Activated T-helper 1 cell treated with anti-CD3 and anti-CD28 coated beads, Interleukin-12 subunit alpha, Interleukin-12 subunit beta, Interleukin-2, Interleukin-4 antibody, amounts not matched to agents 30 ng/mL and 10 ng/mL and 1 ng/mL, durations not matched to agents 14 hours and 24 hours and 36 hours (primary cell): ENCODE measurements at regions of chr9 and their contacts with region 1.

Region 1: DNA sequence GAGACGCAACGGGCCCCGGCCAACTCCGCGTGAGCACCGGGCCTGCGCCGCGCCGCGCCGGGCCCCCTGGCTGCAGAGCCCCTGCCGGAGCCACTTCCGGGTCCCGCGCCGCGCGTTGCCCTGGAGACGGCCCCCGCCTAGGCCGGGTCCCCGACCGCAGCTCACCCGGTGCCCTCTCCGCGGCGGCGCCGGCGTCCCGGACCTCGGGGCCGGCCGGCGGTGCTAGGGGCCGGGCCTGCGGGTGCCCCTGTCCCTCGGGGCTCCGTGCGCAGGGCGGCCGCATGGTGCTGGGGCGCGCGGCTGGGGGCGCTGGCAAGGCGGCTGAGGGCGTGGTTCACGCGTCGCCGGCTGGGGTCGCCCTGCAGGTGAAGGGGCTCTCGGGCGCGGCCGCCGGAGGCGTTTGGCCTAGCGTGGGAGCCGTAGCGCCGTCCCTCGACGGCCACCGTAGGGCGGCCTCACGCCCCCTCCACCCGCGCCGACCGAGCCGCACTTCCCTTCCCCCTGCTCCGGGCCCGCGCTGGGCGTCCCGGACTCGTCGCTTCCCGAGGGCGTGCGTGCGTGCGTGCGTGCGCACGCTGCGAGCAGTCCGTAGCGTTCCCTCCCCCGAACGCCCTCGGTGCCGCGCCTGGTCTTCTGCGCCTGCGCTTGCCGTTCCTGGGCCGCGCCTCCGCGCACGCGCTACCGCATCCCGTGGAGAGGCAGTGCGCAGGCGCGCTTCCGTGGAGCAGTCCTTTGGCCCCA is at the start of gene TMEM250:
- DNase-seq: peak; percentile 96
- H3K4me3 Mint-ChIP-seq: peak within 1 kb of the TSS; percentile 82
- H3K27ac Mint-ChIP-seq: peak within 1 kb of the TSS; percentile 76
- H3K4me1 Mint-ChIP-seq: peaks cover 11% of the 10 kb centered on the region
- H3K27me3 Mint-ChIP-seq: no peaks in the 10 kb centered on the region
- total RNA-seq, gene TMEM250: 50.1 and 51.5 TPM in 2 replicates

Region 2: DNA sequence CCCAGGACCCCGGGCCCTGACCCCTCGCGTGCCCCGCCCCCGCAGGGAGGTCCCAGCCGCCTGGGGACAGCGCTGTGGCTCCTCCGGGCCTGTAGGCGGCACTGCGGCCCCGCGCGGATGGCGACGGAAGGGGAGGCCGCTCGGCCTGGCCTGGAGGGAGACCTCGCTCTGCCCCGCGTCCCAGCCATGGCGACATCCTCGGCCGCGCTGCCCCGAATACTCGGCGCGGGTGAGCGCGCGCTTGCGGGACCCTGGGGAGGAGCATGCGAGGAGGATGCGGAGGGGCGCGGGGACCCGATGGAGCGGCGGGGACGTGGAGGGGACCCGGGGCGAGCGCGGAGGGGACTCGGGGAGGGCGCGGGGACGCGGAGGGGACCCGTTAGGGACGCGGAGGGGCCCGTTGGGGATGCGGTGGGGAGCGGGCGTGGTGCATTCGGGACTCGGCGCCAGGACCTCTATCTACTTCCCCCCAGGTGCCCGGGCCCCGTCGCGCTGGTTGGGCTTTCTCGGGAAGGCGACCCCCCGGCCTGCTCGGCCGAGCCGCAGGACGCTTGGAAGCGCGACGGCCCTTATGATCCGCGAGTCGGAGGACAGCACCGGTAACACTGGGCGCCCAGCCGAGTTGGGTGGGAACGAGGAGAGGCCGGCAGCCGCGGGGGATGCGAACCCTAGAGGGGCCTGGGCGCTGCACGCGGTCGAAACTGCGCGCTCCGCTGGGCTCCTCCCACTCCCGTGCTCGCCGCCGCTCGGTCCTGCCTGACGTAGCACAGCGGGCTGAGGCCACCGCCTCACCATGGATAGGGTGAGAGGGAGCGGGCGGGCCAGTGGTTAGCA is 617.7 kb before region 1 on chr9 and contains the start of gene MRPS2:
- intact Hi-C with region 1: loop called (anchors 10 kb)
- DNase-seq: peak; percentile 85
- H3K4me3 Mint-ChIP-seq: peak within 1 kb of the TSS; percentile 92
- H3K27ac Mint-ChIP-seq: peak within 1 kb of the TSS; percentile 91
- H3K4me1 Mint-ChIP-seq: peaks cover 18% of the 10 kb centered on the region
- H3K27me3 Mint-ChIP-seq: peaks cover 7% of the 10 kb centered on the region
- total RNA-seq, gene MRPS2: 66.6 and 70.8 TPM in 2 replicates

Region 3: GRCh38 chr9:135864447-135865049 is 253.9 kb before region 1 on chr9:
- intact Hi-C with region 1: loop called (anchors 2 kb)
- DNase-seq: peak; percentile 39
- H3K4me3 Mint-ChIP-seq: no peak overlapping the region
- H3K27ac Mint-ChIP-seq: no peak overlapping the region
- H3K4me1 Mint-ChIP-seq: peaks cover 28% of the 10 kb centered on the region
- H3K27me3 Mint-ChIP-seq: no peaks in the 10 kb centered on the region

Region 4: DNA sequence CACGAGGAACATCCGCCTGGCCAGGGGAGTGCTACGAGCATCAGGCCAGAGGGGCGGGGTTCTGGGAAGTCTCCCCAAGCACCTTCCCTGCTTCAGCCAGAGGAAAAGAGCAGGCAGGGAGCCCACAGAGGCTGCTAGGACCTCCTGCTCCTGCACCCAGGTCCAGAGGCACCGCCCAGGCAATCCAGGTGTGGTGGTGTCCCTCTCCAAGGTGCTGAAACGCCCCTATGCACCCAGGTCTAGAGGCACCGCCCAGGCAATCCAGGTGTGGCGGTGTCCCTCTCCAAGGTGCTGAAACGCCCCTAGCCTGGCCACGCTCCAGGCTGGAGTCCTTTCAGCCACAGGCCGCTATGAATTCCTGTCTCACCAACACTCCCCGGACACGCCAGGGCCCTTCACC is 146.6 kb before region 1 on chr9:
- intact Hi-C with region 1: loop called (anchors 1 kb)
- DNase-seq: peak; percentile 32
- H3K4me3 Mint-ChIP-seq: no peak overlapping the region
- H3K27ac Mint-ChIP-seq: no peak overlapping the region
- H3K4me1 Mint-ChIP-seq: peaks cover 9% of the 10 kb centered on the region
- H3K27me3 Mint-ChIP-seq: peaks cover 4% of the 10 kb centered on the region

Region 5: GRCh38 chr9:136312436-136312835 is 193.9 kb after region 1 on chr9:
- intact Hi-C with region 1: no loop called
- DNase-seq: no peak
- H3K4me3 Mint-ChIP-seq: no peak overlapping the region
- H3K27ac Mint-ChIP-seq: no peak overlapping the region
- H3K4me1 Mint-ChIP-seq: no peaks in the 10 kb centered on the region
- H3K27me3 Mint-ChIP-seq: peaks cover 4% of the 10 kb centered on the region

Region 6: GRCh38 chr9:136400038-136400834 is 281.7 kb after region 1 on chr9 and contains the start of gene SNAPC4:
- intact Hi-C with region 1: loop called (anchors 1 kb)
- DNase-seq: peak; percentile 86
- H3K4me3 Mint-ChIP-seq: peak within 1 kb of the TSS; percentile 91
- H3K27ac Mint-ChIP-seq: peak within 1 kb of the TSS; percentile 76
- H3K4me1 Mint-ChIP-seq: peaks cover 40% of the 10 kb centered on the region
- H3K27me3 Mint-ChIP-seq: no peaks in the 10 kb centered on the region
- total RNA-seq, gene SNAPC4: 26.7 TPM in 2 replicates